HCT116 (cell line): ENCODE measurements at regions of chr1 and their contacts with region 1.

Region 1: GRCh38 chr1:170010443-170010842 is 64.1 kb downstream of the KIFAP3 start:
- DNase-seq: peak; percentile 55
- ATAC-seq: no peak
- H3K4me3 ChIP-seq: no peak overlapping the region
- H3K27ac ChIP-seq: no peak overlapping the region
- H3K4me1 ChIP-seq: no peaks in the 10 kb centered on the region
- H3K27me3 ChIP-seq: no peaks in the 10 kb centered on the region
- CTCF ChIP-seq: peak; percentile 39 to 69 (median 55); a peak in 5 of 6 replicates
- POLR2A ChIP-seq: no peak
- RAD21 ChIP-seq: peak; percentile 82

Region 2: DNA sequence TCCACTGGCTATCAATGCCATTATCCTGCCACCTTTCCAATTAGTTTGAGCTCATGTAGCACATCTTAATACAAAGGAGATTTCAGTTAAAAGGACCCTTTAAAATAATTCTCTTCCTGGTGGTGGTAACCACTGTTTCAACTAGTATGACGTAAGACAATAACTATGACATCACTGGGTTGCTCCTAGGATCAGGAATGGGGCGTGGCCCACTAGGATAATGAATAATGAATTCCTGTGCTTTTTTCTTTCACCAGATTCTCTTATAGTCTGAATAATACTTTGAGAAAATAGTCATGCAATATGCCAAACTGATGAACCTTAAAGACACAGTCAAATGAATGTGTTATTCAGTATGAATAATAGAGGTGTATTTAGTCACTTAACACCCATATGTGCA is 74.6 kb after region 1 on chr1:
- CTCF ChIA-PET with region 1: no interaction called
- POLR2A ChIA-PET with region 1: no interaction called
- RAD21 ChIA-PET with region 1: no interaction called
- intact Hi-C with region 1: no loop called
- DNase-seq: no peak
- ATAC-seq: no peak
- H3K4me3 ChIP-seq: no peak overlapping the region
- H3K27ac ChIP-seq: no peak overlapping the region
- H3K4me1 ChIP-seq: no peaks in the 10 kb centered on the region
- H3K27me3 ChIP-seq: no peaks in the 10 kb centered on the region
- CTCF ChIP-seq: no peak
- POLR2A ChIP-seq: no peak
- RAD21 ChIP-seq: no peak

Region 3: DNA sequence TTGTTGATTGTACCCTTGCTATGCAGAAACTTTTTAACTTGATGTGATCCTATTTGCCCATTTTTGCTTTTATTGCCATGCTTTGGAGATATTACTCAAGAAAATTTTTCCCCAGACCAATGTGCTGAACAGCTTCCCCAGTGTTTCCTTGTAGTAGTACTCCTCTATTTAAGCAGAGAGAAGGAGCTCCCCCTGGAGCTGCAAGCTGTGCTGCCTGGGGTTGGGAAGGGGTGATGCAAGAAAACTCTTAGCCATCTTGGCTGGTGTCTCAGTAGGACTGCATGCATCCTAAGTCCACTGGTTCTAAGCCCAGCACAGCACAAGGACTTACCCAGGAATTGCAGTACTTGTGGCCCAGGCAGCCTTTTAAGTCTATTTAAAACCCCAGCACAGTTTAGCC is 256.9 kb after region 1 on chr1:
- CTCF ChIA-PET with region 1: no interaction called
- POLR2A ChIA-PET with region 1: no interaction called
- RAD21 ChIA-PET with region 1: no interaction called
- intact Hi-C with region 1: loop called (anchors 1 kb)
- DNase-seq: peak; percentile 19
- ATAC-seq: peak; percentile 71
- H3K4me3 ChIP-seq: no peak overlapping the region
- H3K27ac ChIP-seq: no peak overlapping the region
- H3K4me1 ChIP-seq: no peaks in the 10 kb centered on the region
- H3K27me3 ChIP-seq: no peaks in the 10 kb centered on the region
- CTCF ChIP-seq: peak; percentile 33 to 61 (median 35); a peak in 4 of 6 replicates
- POLR2A ChIP-seq: no peak
- RAD21 ChIP-seq: peak; percentile 60

Region 4: DNA sequence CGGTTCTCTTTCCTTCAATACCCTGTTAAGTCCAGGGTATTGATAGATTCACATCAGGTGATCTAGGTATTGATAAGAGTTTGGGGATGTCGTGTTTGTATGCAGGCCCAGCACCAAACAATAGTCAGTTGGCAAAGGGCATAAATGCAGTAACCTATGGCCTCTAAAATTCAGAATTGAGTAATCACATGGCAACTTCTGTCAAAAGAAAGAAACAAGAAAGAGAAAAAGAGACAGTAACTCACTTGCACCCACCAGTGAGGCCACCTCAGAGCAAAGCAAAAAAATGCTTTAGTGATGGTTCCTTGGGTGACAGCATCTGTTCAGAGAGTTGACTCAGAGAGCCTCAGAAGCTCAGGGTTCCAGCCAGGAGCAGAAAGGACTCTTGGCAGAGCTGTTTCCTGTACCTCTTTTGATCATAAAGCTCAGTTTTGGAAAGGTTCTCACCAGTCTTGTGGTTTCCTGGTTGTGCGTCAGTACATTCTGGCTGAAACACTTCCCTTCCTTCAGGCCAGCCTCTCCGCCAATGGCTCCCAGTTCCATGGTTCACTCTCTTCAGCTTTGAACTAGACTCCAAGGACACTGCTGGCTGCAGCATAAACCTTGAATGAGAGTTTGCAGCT is 451.4 kb after region 1 on chr1:
- CTCF ChIA-PET with region 1: interaction called, 6 read pairs
- POLR2A ChIA-PET with region 1: no interaction called
- RAD21 ChIA-PET with region 1: no interaction called
- intact Hi-C with region 1: loop called (anchors 1 kb)
- DNase-seq: no peak
- ATAC-seq: no peak
- H3K4me3 ChIP-seq: no peak overlapping the region
- H3K27ac ChIP-seq: no peak overlapping the region
- H3K4me1 ChIP-seq: no peaks in the 10 kb centered on the region
- H3K27me3 ChIP-seq: no peaks in the 10 kb centered on the region
- CTCF ChIP-seq: no peak
- POLR2A ChIP-seq: no peak
- RAD21 ChIP-seq: no peak

Region 5: GRCh38 chr1:170765712-170766330 is 755.4 kb after region 1 on chr1:
- CTCF ChIA-PET with region 1: no interaction called
- POLR2A ChIA-PET with region 1: no interaction called
- RAD21 ChIA-PET with region 1: no interaction called
- intact Hi-C with region 1: loop called (anchors 2 kb)
- DNase-seq: peak; percentile 21
- ATAC-seq: peak; percentile 73
- H3K4me3 ChIP-seq: no peak overlapping the region
- H3K27ac ChIP-seq: no peak overlapping the region
- H3K4me1 ChIP-seq: no peaks in the 10 kb centered on the region
- H3K27me3 ChIP-seq: no peaks in the 10 kb centered on the region
- CTCF ChIP-seq: peak; percentile 31 to 64 (median 61); a peak in 5 of 6 replicates
- POLR2A ChIP-seq: no peak
- RAD21 ChIP-seq: peak; percentile 79

Region 6: GRCh38 chr1:170881268-170882265 is 871.1 kb after region 1 on chr1:
- CTCF ChIA-PET with region 1: interaction called, 3 read pairs
- POLR2A ChIA-PET with region 1: no interaction called
- RAD21 ChIA-PET with region 1: no interaction called
- intact Hi-C with region 1: loop called (anchors 1 kb)
- DNase-seq: peak; percentile 37
- ATAC-seq: peak; percentile 89
- H3K4me3 ChIP-seq: no peak overlapping the region
- H3K27ac ChIP-seq: no peak overlapping the region
- H3K4me1 ChIP-seq: no peaks in the 10 kb centered on the region
- H3K27me3 ChIP-seq: no peaks in the 10 kb centered on the region
- CTCF ChIP-seq: peak; percentile 41 to 90 (median 68)
- POLR2A ChIP-seq: no peak
- RAD21 ChIP-seq: peak; percentile 88